Right ventricle myocardium inferior (tissue), 1 donor: ENCODE measurements at regions of chr15 and their contacts with region 1.

Region 1: DNA sequence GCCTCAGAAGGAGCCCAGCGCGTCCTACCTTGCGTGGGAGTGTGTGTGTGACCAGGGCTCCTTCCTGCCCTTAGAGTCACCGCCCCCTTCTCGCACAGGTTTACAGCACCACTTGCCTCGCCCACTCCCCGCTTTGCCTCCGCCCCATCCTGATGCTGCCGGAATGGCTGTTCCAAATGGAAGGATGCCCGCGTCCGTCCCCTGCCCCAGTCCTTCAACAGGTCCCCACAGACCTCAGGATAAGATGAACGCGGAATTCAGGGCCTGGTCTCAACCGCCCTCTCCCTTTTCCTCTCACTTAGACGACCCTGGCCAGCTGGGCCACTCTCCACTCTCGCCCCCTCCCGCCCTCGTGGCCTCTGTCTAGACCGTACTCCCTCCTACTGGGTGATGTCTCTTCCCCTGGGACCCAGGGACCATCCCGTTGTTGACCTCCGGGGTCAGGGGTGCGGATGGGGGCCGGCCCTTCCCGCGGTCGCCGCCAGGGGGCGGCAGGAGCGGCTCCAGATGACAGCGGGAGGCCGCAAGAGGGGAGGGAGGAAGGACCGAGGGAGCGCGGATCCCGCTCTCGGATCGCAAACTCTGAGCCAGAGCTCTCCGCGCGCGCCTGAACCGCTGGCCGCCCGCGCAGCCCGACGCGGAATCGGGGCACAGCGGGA is at the start of gene THSD4:
- DNase-seq: peak; percentile 76
- ATAC-seq: peak; percentile 64
- total RNA-seq, gene THSD4: 73.1 TPM

Region 2: GRCh38 chr15:71151081-71151480 is 36.1 kb after region 1 on chr15:
- intact Hi-C with region 1: loop called (anchors 1 kb)
- DNase-seq: no peak
- ATAC-seq: no peak

Region 3: DNA sequence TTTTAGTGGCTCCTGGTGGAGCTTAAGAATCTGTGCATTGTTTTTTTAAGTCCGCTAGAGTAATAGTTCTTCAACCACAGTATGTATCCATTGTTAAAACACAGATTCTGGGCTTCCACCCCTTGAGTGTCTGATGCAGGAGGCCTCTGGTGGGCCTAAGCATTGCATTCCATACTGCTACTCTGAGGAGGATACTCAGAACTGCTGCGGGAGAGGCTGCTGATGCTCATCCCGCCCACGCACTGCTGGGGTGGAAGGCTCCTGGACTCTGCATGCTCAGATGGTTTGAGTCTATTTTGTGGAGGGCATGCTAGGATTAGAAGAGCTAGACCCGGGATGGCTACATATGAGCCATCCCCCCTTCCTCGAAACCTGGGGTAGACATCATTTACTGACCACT is 74.7 kb after region 1 on chr15:
- intact Hi-C with region 1: loop called (anchors 5 kb)
- DNase-seq: no peak
- ATAC-seq: no peak

Region 4: DNA sequence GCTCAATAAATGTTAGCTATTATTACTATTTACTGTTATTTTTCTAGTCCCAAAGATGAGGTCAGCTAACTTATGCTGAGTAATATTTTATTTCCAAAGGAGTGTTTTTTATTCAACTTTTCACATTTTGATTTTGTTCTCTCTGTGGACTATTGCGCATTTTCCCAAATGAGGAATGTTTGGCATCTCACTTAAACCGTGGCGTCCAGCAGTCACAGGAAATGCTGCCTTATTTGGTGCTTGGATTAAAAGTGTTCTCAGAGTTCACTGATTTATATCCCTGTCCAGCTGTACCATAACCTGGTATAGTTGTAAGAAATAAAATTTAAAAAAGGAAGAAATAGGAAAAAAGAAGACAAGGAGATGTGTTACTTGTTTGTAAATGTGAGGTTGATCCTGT is 167.1 kb after region 1 on chr15:
- intact Hi-C with region 1: loop called (anchors 5 kb)
- DNase-seq: no peak
- ATAC-seq: peak; percentile 6

Region 5: DNA sequence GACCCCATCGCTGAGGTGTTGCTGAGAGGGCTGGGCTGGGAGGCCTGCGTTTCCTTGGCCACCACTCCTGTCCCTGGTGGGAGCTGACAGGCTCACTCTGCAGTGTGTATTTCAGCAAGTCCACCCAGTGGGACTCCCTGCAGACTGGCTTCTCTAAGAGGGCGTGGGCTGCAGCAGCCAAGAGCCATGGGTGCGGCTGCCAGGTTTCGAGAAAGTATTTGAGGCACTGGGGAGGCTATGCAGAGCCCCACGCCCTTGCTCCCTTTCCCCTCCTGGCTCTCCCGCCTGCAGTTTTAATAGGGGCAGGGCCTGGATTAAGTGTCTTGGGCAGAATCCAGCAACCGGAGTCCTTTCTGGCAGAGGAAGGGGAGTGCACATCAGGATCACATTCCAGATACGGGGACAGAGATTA is 242.3 kb after region 1 on chr15:
- intact Hi-C with region 1: loop called (anchors 10 kb)
- DNase-seq: no peak
- ATAC-seq: peak; percentile 88

Region 6: GRCh38 chr15:71800835-71801745 is 686.1 kb after region 1 on chr15:
- intact Hi-C with region 1: loop called (anchors 10 kb)
- DNase-seq: no peak
- ATAC-seq: peak; percentile 77